Endothelial cell of umbilical vein (primary cell): ENCODE measurements at regions of chr19 and their contacts with region 1.

Region 1: GRCh38 chr19:51082611-51083010 is at the start of gene KLK14:
- DNase-seq: no peak
- H3K4me3 ChIP-seq: no peak within 1 kb of the TSS
- H3K27ac ChIP-seq: no peak within 1 kb of the TSS
- H3K4me1 ChIP-seq: no peaks in the 10 kb centered on the region
- H3K27me3 ChIP-seq: no peaks in the 10 kb centered on the region
- CTCF ChIP-seq: no peak
- POLR2A ChIP-seq: no peak
- total RNA-seq, gene KLK14: not detected in 2 replicates

Region 2: GRCh38 chr19:51158474-51159129 is 76.0 kb after region 1 on chr19:
- CTCF ChIA-PET with region 1: no interaction called
- POLR2A ChIA-PET with region 1: no interaction called
- dilution Hi-C with region 1: no loop called
- intact Hi-C with region 1: loop called (anchors 2 kb)
- DNase-seq: peak; percentile 12
- H3K4me3 ChIP-seq: no peak overlapping the region
- H3K27ac ChIP-seq: no peak overlapping the region
- H3K4me1 ChIP-seq: no peaks in the 10 kb centered on the region
- H3K27me3 ChIP-seq: peaks cover 0 to 4% of the 10 kb centered on the region in 2 experiments
- CTCF ChIP-seq: peak; percentile 60 to 79
- POLR2A ChIP-seq: no peak